Cardiac septum (tissue), 1 donor: ENCODE measurements at regions of chr3 and their contacts with region 1.

Region 1: DNA sequence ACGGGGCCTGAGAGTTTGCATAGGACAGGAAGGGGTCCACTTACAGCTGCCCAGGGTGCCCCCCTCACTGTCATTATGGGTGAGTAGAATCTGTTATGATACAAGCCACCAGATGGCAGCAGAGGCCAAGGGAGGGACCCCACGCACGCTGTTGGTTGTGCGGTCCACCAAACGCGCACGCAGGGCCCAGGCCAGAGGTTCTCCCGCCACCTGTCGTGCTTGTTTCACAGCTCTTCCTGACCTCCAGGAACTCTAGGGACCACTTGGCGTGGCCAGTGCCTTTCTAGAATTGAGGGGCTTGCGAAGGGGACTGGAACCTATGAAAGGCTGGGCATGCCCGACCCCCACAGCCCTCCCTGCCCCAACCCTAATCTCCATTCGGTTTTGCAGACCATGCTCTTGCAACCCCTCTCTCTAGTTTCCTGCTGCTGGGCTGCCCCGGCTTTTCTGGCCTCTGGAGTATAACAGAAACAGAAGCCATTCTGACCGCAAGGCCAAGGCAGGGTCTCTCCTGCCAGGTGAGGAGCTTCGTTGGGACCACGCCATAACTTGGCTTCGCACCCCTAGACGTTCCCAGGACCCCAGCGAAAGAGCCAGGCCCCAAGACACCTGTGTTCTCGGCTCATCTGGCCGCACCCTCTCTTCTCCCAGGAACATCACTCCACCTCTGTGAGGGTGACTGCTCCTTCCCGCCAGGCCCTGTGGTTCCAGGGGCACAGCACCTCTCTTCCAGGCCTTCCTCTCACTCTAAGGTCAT is 46.0 kb downstream of the ALDH1L1 start:
- DNase-seq: peak; percentile 74

Region 2: DNA sequence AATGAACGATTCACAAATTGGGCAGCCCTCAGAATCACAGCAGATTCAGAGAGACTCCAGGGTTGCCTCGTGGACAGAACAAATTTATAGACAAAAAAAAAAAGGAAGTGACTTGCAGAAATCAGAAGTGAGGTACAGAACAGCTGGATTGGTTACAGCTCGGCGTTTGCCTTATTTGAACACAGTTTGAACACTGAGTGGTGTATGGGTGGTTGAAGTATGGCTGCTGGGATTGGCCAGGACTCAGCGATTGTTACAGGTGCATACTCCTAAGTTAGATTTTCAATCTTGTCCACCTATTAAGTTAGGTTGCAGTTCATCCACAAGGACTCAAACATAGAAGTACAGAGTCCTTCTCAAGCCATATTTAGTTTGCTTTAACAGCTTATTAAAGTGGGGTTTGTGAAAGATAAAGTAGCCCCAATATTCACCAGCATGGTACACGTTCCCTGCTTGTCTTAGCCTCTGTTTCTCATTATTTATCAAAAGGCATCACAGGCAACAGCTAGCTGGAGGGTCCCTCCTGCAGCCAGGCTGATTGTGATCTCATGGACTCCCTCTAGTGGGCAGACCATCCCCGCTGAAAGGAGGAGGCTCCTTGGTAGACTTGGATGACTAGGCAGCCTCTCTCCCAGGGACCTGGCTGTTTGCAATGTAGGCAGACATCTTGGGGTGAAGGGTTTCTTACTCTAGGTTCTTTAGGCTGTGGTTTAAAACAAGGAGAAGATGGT is 63.6 kb after region 1 on chr3:
- intact Hi-C with region 1: loop called (anchors 2 kb)
- DNase-seq: no peak